Activated CD4-positive, alpha-beta memory T cell treated with anti-CD3 and anti-CD28 coated beads, Interleukin-2, amount 10 ng/mL, durations not matched to agents 7 days and 5 days (primary cell): ENCODE measurements at regions of chr22 and their contacts with region 1.

Region 1: GRCh38 chr22:21652010-21652546 is 10.0 kb downstream of the SDF2L1 start:
- DNase-seq: peak; percentile 92
- H3K4me3 Mint-ChIP-seq: peak overlapping the region; percentile 81
- H3K27ac Mint-ChIP-seq: peak overlapping the region; percentile 84
- H3K4me1 Mint-ChIP-seq: peaks cover 35% of the 10 kb centered on the region
- H3K27me3 Mint-ChIP-seq: no peaks in the 10 kb centered on the region

Region 2: GRCh38 chr22:21666786-21667185 is 14.7 kb after region 1 on chr22:
- CTCF ChIA-PET with region 1: interaction called, 8 read pairs
- POLR2A ChIA-PET with region 1: interaction called, 29 read pairs
- DNase-seq: no peak
- H3K4me3 Mint-ChIP-seq: peak overlapping the region; percentile 92
- H3K27ac Mint-ChIP-seq: peak overlapping the region; percentile 99
- H3K4me1 Mint-ChIP-seq: peaks cover 42% of the 10 kb centered on the region
- H3K27me3 Mint-ChIP-seq: no peaks in the 10 kb centered on the region